Activated CD8-positive, alpha-beta T cell treated with anti-CD3 and anti-CD28 coated beads for 36 hours (primary cell): ENCODE measurements at regions of chr19 and their contacts with region 1.

Region 1: GRCh38 chr19:18469069-18469846 is 31.3 kb upstream of the ISYNA1 start:
- DNase-seq: peak; percentile 77
- ATAC-seq: peak; percentile 56
- H3K4me3 Mint-ChIP-seq: no peak overlapping the region
- H3K27ac Mint-ChIP-seq: no peak overlapping the region
- H3K4me1 Mint-ChIP-seq: peaks cover 28% of the 10 kb centered on the region
- H3K27me3 Mint-ChIP-seq: no peaks in the 10 kb centered on the region
- CTCF ChIP-seq: no peak

Region 2: DNA sequence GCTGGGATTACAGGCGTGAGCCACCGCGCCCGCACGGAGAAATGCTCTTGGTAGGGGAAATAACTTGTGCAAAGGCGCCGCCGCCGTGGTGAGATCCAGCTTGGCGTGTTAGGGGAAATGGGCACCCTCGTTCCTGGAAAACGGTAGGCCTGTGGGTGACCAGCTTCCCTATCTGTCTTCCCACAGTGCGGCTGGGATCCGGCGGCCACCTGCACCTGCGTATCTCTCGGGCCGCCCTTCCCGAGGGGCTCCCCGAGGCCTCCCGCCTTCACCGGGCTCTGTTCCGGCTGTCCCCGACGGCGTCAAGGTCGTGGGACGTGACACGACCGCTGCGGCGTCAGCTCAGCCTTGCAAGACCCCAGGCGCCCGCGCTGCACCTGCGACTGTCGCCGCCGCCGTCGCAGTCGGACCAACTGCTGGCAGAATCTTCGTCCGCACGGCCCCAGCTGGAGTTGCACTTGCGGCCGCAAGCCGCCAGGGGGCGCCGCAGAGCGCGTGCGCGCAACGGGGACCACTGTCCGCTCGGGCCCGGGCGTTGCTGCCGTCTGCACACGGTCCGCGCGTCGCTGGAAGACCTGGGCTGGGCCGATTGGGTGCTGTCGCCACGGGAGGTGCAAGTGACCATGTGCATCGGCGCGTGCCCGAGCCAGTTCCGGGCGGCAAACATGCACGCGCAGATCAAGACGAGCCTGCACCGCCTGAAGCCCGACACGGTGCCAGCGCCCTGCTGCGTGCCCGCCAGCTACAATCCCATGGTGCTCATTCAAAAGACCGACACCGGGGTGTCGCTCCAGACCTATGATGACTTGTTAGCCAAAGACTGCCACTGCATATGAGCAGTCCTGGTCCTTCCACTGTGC is 80.9 kb before region 1 on chr19:
- CTCF ChIA-PET with region 1: no interaction called
- POLR2A ChIA-PET with region 1: no interaction called
- intact Hi-C with region 1: no loop called
- DNase-seq: peak; percentile 83
- ATAC-seq: peak; percentile 90
- H3K4me3 Mint-ChIP-seq: peak overlapping the region; percentile 62
- H3K27ac Mint-ChIP-seq: no peak overlapping the region
- H3K4me1 Mint-ChIP-seq: peaks cover 6% of the 10 kb centered on the region
- H3K27me3 Mint-ChIP-seq: peaks cover 36% of the 10 kb centered on the region
- CTCF ChIP-seq: peak; percentile 100

Region 3: DNA sequence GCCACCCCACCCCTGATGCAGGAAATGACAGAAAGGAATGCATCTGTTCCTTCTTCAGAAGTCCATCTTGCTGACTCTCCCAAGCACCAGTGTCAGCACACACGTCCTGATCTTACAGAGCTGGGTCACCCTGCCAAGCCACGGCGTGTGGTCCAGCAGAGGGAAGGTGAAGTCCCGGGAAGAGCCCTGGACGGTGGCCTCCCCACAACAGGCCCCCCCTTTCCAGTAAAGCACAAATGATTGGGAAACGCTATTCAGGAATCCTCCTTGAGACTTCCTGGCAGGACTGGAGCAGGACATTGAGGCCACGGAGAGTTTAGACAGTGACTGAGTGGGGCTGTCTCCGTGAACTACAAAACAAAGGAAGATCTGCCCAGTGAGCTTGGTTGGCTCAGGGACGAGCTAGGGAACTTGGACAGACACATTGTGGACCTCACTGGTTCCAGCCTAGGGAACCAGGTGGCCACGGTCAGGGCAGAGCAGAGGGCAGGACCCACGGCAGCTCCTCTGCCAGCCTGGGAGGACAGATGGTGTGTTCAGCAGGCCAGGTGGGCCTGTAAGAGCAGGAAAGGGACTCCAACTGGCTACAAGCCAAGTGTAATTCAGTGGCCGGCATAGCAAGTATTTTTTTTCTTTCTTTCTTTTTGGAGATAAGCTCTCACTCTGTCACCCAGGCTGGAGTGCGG is 10.9 kb after region 1 on chr19:
- CTCF ChIA-PET with region 1: interaction called, 13 read pairs
- POLR2A ChIA-PET with region 1: interaction called, 3 read pairs
- intact Hi-C with region 1: no loop called
- DNase-seq: no peak
- ATAC-seq: no peak
- H3K4me3 Mint-ChIP-seq: no peak overlapping the region
- H3K27ac Mint-ChIP-seq: peak overlapping the region; percentile 91
- H3K4me1 Mint-ChIP-seq: peaks cover 77% of the 10 kb centered on the region
- H3K27me3 Mint-ChIP-seq: no peaks in the 10 kb centered on the region
- CTCF ChIP-seq: no peak